ENCODE measurements at regions of chr1 and their contacts with region 1.

Region 1: DNA sequence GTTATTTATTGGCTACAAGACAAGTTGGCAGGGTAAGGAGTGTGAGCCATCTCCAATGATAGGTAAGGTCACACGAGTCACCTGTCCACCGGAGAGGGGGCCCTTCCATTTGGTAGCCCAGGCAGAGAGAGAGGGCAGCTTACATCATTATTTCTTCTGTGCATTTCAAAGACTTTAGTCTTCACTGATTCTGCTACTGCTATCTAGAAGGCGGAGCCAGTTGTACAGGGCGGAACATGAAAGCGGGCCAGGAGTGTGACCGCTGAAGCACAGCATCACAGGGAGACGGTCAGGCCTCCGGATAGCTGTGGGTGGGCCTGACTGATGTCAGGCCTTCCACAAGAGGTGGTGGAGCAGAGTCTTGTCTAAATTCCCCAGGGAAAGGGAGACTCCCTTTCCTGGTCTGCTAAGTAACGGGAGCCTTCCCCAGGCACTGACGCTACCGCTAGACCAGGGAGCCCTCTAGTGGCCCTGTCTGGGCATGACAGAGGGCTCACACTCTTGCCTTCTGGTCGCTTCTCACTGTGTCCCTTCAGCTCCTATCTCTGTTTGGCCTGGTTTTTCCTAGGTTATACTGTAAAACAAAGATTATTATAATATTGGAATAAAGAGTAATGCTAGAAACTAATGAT is 36.7 kb downstream of the ZNF695 start:
- ATAC-seq: peak in 1 of 8 experiments; percentile 65
- H3K4me3 ChIP-seq: no peak overlapping the region
- H3K27ac ChIP-seq: no peak overlapping the region
- H3K4me1 ChIP-seq: no peaks in the 10 kb centered on the region

Region 2: DNA sequence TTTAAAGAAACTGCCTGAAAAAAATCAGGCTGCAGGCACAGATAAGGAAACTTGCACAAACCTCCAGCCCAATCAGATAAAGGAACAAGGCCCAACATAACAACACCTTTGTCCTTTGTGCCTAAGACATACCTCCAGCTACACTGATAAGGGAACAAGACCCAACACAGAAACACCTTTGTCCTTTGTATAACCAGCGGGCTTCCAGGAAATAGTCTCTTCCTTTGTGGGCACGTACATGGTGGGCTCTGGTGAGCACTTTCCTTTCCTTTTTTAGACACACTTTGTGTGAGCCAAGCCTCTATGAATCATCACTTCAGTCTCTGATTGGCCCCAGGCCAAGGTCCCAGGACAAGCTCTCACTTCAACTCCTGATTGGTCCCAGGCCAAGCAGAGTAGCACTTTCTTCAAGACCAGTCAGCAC is 83.8 kb after region 1 on chr1:
- in situ Hi-C with region 1: loop called in 1 of 9 experiments (anchors 25 kb)
- ATAC-seq: no peak
- H3K4me3 ChIP-seq: no peak overlapping the region
- H3K27ac ChIP-seq: no peak overlapping the region
- H3K4me1 ChIP-seq: no peaks in the 10 kb centered on the region

Measured in motor neuron (in vitro differentiated cells).